ENCODE measurements at regions of chr13 and their contacts with region 1.

Region 1: DNA sequence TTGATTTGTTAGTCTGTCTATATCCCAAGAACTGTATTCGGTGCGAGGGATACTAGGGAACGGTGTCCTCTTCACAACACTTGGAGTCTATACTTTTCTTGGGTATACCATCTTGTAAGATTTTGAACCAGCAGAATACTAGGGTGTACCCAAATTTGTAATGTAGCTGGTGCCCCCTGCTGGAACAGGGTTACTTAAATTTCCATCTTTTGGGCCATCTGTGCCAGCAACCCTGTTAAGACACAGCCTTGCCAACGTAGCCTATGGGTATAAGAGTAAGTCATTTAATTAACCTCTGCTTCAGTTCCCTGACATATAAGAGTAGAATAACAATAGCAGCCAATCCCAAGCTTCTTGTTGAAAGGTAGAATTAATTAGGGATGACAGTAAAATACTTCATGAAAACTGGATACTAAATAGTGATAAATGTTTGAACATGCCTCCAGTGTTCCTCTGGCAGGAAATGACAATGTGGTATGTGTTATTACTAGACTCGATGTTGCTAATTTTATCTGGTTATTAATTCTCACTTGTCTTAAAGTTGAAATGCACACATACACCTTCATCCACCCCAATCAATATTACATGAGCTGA is 607.6 kb downstream of the FGF9 start:
- DNase-seq: peak in 4 of 5 donors; percentile 36 to 46 (median 39)
- ATAC-seq: peak in 3 of 4 donors; percentile 5 to 65 (median 50)
- H3K4me3 ChIP-seq: no peak overlapping the region
- H3K27ac ChIP-seq: no peak overlapping the region
- H3K4me1 ChIP-seq: no peaks in the 10 kb centered on the region
- H3K27me3 ChIP-seq: no peaks in the 10 kb centered on the region
- CTCF ChIP-seq: peak in 11 of 12 donors; percentile 12 to 55 (median 45)
- POLR2A ChIP-seq: no peak

Region 2: DNA sequence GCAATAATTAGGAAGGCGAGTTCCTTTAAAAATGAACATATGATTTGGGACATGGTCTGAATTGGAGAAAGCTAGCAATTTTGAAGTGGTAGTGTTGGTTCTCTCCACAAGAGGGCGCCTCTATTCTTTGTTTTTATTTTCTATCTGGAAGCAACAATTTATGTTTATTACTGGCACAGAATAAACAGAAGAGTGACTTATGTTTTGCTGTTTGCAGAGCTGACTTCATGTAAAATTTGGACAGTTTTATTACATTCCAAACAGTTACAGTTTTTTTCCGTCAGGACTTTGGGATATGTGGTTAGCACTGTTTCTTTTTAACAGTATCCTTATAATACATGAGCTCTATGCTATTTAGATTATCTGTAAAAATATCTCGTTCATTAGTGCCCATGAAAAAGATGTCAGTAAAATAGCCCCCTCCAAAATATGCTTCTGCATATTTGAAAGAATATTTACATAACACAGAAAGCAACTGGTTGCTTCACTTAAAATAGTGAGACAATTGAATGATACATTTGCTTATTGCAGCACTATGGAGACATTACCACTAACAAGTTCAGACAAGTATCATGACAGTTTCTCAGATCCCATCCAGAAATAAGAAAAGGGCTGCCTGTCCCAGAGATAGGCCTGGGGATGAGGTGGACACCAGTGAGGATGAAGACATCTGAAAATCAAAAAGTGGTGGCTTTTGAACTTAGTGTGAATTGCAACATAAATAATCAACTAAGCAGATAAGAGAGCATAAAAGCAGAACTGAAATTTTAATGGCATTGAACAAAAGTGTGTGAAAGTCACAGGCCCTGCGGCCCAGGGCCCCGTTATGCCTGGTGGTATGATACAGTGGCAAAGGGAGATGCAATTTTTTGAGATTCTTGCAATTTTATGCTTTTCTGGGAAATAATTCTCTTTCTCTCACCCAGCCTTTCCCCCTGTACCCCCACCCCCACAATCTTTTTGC is 639.8 kb before region 1 on chr13:
- intact Hi-C with region 1: loop called in 9 of 10 experiments (anchors 2 to 10 kb)
- DNase-seq: no peak
- ATAC-seq: no peak
- H3K4me3 ChIP-seq: no peak overlapping the region
- H3K27ac ChIP-seq: no peak overlapping the region
- H3K4me1 ChIP-seq: no peaks in the 10 kb centered on the region
- H3K27me3 ChIP-seq: peaks cover 0 to 14% (median 0%) of the 10 kb centered on the region in 9 donors
- CTCF ChIP-seq: peak; percentile 72 to 88 (median 78)
- POLR2A ChIP-seq: no peak

Region 3: GRCh38 chr13:22173610-22174009 is 104.8 kb before region 1 on chr13:
- intact Hi-C with region 1: loop called in 1 of 10 experiments (anchors 5 kb)
- DNase-seq: no peak
- ATAC-seq: peak in 1 of 4 donors; percentile 55
- H3K4me3 ChIP-seq: no peak overlapping the region
- H3K27ac ChIP-seq: no peak overlapping the region
- H3K4me1 ChIP-seq: no peaks in the 10 kb centered on the region
- H3K27me3 ChIP-seq: no peaks in the 10 kb centered on the region
- CTCF ChIP-seq: no peak
- POLR2A ChIP-seq: no peak